Activated naive CD8-positive, alpha-beta T cell treated with anti-CD3 and anti-CD28 coated beads, Interleukin-2, amount 10 ng/mL, durations not matched to agents 7 days and 5 days (primary cell): ENCODE measurements at regions of chr5 and their contacts with region 1.

Region 1: GRCh38 chr5:170333161-170333910 is 35.8 kb upstream of the LCP2 start:
- DNase-seq: peak; percentile 46
- ATAC-seq: peak; percentile 27
- H3K4me3 Mint-ChIP-seq: no peak overlapping the region
- H3K27ac Mint-ChIP-seq: no peak overlapping the region
- H3K4me1 Mint-ChIP-seq: peaks cover 56% of the 10 kb centered on the region
- H3K27me3 Mint-ChIP-seq: no peaks in the 10 kb centered on the region

Region 2: DNA sequence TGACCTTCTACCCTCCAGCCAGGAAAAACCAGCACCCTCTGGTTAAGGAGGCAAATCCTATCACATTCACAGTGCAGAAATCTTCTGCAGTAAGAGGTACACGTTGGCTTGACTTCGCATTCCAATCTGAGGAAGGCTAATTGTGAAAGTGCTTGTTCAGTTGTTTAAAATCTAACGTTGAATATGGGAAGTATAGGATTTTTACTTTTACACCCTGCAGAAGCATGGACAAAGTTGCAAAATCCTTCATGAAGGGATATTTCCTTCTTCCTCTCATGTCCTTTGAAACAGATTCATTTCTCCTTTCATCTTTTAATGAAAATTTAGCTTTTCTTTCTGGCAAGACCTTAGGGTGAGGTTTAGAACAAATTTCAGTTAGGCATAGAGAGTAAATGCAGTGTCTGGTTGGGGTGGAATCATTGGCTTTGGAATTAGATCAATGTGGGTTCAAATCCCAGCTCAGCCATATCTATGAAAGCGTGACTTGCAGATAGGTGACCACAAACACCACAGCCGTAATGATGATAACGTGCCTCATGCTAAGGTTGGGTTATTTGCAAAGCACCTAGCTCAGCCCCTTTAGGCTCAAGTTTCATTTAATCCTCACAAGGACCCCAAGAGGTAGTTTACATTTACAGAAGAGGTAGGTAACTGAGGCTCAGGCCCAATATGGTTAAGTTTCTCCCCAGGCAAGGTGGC is 142.8 kb before region 1 on chr5:
- POLR2A ChIA-PET with region 1: no interaction called
- DNase-seq: no peak
- ATAC-seq: no peak
- H3K4me3 Mint-ChIP-seq: no peak overlapping the region
- H3K27ac Mint-ChIP-seq: no peak overlapping the region
- H3K4me1 Mint-ChIP-seq: peaks cover 4% of the 10 kb centered on the region
- H3K27me3 Mint-ChIP-seq: peaks cover 5% of the 10 kb centered on the region

Region 3: DNA sequence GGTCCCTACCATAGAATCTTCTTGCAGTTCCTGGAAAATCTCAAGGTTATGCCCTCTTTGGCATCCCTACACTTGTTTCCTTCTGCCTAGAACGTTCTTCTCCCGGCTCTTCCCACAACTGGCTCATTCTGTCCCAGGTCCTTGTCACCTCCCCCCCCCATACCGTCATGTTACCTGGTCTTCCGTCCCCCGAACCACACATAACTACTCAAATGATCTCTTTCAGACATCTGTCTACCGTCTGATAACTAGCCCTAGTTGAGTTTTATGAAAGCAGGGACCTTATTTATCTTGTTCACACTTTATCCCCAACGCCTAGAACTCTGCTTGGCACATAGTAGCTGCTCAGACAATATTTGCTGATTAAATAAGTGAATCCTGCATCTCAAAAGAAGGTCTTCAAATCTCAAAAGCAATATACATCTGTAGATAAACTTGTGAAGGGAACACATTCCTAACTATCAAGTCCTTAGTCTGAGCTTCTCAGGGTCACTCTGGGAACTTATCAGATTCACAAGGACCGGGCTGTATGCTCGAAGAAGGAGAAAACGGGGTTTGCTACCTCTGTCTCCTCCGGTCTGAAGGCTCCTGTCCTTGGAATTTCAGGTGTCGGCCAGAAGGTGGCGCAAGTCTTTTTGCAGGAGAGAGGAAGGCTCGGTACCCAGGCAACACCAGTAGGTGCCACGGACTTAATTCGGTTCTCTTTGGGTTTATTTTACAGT is 65.7 kb before region 1 on chr5:
- POLR2A ChIA-PET with region 1: interaction called, 34 read pairs
- DNase-seq: peak; percentile 79
- ATAC-seq: peak; percentile 44
- H3K4me3 Mint-ChIP-seq: peak overlapping the region; percentile 75
- H3K27ac Mint-ChIP-seq: peak overlapping the region; percentile 92
- H3K4me1 Mint-ChIP-seq: peaks cover 85% of the 10 kb centered on the region
- H3K27me3 Mint-ChIP-seq: no peaks in the 10 kb centered on the region

Region 4: DNA sequence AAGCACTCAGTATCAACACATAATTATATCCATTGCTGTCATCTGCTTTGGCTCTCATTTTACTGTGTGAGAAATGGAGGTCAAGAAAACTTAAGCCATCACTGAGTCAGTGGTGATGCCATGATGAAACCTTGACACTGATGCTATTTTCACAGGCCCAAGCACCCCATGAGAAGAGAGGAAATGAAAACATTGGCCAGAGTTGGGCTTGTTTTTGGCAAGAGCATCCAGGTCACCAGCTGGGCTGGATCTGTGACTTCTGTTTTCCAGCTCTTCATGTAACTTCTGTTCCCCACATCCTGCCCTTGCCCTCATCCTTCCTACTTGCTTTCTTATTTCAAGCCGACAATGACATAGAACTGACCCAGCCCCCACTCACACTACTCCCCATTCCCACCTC is 45.8 kb before region 1 on chr5:
- POLR2A ChIA-PET with region 1: interaction called, 371 read pairs
- DNase-seq: no peak
- ATAC-seq: no peak
- H3K4me3 Mint-ChIP-seq: peak overlapping the region; percentile 61
- H3K27ac Mint-ChIP-seq: peak overlapping the region; percentile 73
- H3K4me1 Mint-ChIP-seq: peaks cover 95% of the 10 kb centered on the region
- H3K27me3 Mint-ChIP-seq: no peaks in the 10 kb centered on the region

Region 5: DNA sequence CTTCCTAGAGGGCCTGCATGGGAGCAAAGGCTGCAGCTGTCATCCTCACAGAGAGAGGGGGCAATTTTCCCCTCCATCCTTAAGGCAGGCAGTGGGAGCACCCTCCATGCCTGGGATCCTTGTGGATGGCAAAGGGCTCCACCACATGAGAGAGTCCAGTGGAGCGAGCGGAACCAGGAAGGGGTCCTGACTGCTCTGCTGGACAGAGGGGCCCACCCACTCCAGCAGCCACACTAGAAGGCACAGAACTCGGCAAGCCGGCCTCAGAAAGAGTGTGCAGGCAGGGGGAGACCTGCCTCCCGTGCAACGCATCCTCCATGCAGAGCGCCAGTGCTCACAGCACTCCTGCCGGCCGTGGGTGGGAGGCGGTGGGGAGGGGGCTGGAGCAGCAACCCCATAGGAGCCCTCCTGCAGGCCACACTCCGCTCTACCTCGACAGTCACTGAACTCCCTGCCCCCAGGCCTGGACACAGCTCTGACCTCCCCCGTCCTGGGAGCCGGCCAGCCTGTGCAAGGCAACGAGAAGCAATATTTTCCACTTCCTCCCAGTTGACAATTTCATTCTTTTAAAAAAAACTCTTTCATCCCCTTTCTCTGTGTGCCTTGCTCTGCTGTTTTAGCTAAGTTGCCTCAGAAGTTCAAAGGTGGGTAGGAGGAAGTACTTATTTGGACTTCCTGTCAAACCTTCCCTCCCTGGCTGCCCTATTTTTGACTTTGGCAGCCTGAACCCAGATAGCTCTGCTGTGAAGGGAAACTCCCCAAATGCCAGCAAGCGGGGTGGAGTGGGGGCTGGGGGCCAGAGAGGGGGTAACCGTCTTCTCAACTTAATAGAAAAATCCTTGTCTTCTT is 30.5 kb before region 1 on chr5:
- POLR2A ChIA-PET with region 1: interaction called, 371 read pairs
- DNase-seq: peak; percentile 75
- ATAC-seq: peak; percentile 93
- H3K4me3 Mint-ChIP-seq: peak overlapping the region; percentile 94
- H3K27ac Mint-ChIP-seq: peak overlapping the region; percentile 99
- H3K4me1 Mint-ChIP-seq: peaks cover 55% of the 10 kb centered on the region
- H3K27me3 Mint-ChIP-seq: no peaks in the 10 kb centered on the region

Region 6: GRCh38 chr5:170357955-170358444 is 24.7 kb after region 1 on chr5:
- POLR2A ChIA-PET with region 1: no interaction called
- DNase-seq: no peak
- ATAC-seq: no peak
- H3K4me3 Mint-ChIP-seq: no peak overlapping the region
- H3K27ac Mint-ChIP-seq: no peak overlapping the region
- H3K4me1 Mint-ChIP-seq: peaks cover 2% of the 10 kb centered on the region
- H3K27me3 Mint-ChIP-seq: peaks cover 13% of the 10 kb centered on the region

Region 7: GRCh38 chr5:170368586-170368985 is 35.2 kb after region 1 on chr5:
- POLR2A ChIA-PET with region 1: no interaction called
- DNase-seq: no peak
- ATAC-seq: no peak
- H3K4me3 Mint-ChIP-seq: no peak overlapping the region
- H3K27ac Mint-ChIP-seq: no peak overlapping the region
- H3K4me1 Mint-ChIP-seq: no peaks in the 10 kb centered on the region
- H3K27me3 Mint-ChIP-seq: peaks cover 19% of the 10 kb centered on the region